Adrenal gland (tissue), 19 donors: ENCODE measurements at regions of chr14 and their contacts with region 1.

Region 1: GRCh38 chr14:71138448-71139293 is 231.4 kb downstream of the PCNX1 start:
- DNase-seq: peak; percentile 45 to 78 (median 57)
- H3K4me3 ChIP-seq: no peak overlapping the region
- H3K27ac ChIP-seq: no peak overlapping the region
- H3K4me1 ChIP-seq: peaks cover 6 to 13% of the 10 kb centered on the region in 2 donors
- H3K27me3 ChIP-seq: no peaks in the 10 kb centered on the region
- CTCF ChIP-seq: peak; percentile 88 to 97 (median 94)
- POLR2A ChIP-seq: no peak

Region 2: DNA sequence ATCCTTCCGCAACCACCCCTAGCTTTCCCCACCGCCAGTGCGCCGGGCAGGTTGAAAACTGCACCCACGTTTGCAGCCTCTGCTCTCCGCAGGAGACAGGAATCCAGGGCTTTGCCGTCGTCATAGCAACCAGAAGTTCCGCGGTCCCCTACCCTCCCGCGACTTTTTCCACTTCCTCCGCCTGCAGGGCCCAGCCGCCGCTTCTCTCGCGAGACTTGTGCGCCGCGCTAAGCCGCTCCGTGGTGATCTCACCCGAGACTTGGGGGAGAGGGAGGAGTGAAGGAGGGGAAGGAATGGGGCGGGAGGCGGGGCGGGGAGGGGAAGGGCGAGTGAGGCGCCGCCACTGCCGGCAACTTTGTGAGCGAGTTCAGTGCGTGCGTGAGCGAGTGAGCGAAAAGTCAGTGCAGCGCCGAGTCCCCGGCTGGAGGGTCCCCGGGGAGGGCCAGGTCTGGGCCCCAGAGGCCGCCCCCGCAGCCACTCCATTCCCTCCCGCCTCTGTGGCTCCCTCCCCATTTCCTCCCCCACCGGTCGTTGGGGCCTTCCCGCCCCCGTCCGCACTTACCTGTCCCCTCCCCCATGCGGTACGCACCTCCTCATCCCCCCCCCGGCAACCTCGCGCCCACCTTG is 181.5 kb after region 1 on chr14:
- intact Hi-C with region 1: loop called (anchors 5 to 10 kb)
- DNase-seq: peak; percentile 98 to 99 (median 99)
- H3K4me3 ChIP-seq: peak within 1 kb of the TSS; percentile 59 to 96 (median 74)
- H3K27ac ChIP-seq: peak within 1 kb of the TSS; percentile 92 to 97 (median 96)
- H3K4me1 ChIP-seq: peaks cover 13 to 39% of the 10 kb centered on the region in 2 donors
- H3K27me3 ChIP-seq: no peaks in the 10 kb centered on the region
- CTCF ChIP-seq: peak in 1 of 6 experiments; percentile 29
- POLR2A ChIP-seq: peak; percentile 88 to 90

Region 3: DNA sequence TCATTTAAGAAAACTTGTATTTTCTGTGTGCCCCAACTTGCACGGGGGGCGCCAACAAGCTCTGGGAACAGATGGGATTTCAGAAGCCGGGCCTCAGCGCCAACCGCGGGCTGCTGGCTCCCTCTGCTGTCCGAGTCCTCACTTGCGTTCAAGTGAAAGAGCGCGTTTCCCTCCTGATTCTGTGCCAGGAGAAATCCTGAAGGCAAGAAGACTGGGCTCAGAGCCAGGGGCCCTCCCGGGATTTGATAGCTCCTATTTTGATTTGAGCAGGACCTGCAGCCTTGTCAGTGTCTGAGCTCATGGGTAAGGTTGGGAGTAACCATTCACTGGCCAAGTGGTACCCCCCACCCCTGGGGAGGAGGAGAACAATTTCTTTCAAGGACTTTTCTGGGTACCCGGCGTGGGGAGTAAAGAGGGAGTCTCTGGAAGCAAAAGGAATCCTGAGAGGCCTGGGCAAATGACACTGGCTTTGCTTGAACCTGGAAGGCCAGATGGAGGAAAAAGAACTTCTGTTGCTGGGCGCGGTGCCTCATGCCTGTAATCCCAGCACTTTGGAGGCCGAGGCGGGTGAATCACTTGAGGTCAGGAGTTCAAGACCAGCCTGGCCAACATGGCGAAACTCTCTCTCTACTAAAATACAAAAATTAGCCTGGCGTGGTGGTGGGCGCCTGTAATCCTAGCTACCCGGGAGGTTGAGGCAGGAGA is 614.6 kb after region 1 on chr14:
- intact Hi-C with region 1: loop called (anchors 2 to 5 kb)
- DNase-seq: peak; percentile 91 to 98 (median 97)
- H3K4me3 ChIP-seq: no peak overlapping the region
- H3K27ac ChIP-seq: peak overlapping the region in 3 of 5 donors; percentile 55 to 71 (median 66)
- H3K4me1 ChIP-seq: peaks cover 4 to 10% of the 10 kb centered on the region in 2 donors
- H3K27me3 ChIP-seq: no peaks in the 10 kb centered on the region
- CTCF ChIP-seq: peak; percentile 75 to 98 (median 94)
- POLR2A ChIP-seq: no peak

Region 4: DNA sequence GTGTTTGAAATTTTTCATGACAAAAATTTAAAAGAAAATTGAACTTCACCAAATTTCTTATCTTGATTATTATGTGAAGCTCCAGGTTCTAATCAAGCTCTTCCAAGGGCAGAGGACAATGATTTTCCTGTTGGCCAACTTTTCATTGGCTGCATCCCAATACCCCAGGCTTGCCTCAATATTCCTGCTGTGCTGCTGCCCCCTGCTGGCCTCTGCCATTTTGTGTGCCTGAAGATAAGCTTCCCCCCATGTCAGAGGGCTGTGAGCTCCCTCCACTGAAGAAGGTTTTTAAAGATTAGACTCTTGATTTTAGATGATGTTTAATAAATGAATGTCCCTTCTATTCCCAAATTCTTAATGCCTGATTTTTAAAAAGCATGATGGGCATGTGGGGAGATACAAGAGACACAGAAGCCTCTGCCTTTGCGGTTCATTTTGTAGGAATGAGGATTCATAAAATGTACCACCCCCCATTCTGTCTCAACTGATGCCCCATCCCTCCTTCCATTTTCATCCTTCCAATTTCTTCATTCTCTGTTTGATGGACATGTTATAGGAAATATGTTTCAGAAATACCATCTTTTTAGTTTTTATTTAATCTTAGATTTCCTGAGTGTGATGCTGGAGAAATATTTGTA is 716.8 kb after region 1 on chr14:
- intact Hi-C with region 1: loop called in 1 of 2 experiments (anchors 10 kb)
- DNase-seq: peak; percentile 81 to 94 (median 92)
- H3K4me3 ChIP-seq: no peak overlapping the region
- H3K27ac ChIP-seq: no peak overlapping the region
- H3K4me1 ChIP-seq: no peaks in the 10 kb centered on the region
- H3K27me3 ChIP-seq: no peaks in the 10 kb centered on the region
- CTCF ChIP-seq: peak; percentile 71 to 84 (median 73)
- POLR2A ChIP-seq: no peak